Ovary (tissue), 10 donors: ENCODE measurements at regions of chr4 and their contacts with region 1.

Region 1: GRCh38 chr4:87058356-87059073 is 123.7 kb downstream of the AFF1 start:
- DNase-seq: no peak
- H3K4me3 ChIP-seq: no peak overlapping the region
- H3K27ac ChIP-seq: peak overlapping the region in 1 of 2 donors; percentile 54
- H3K4me1 ChIP-seq: peaks cover 28% of the 10 kb centered on the region
- H3K27me3 ChIP-seq: no peaks in the 10 kb centered on the region
- CTCF ChIP-seq: no peak
- EP300 ChIP-seq: no peak
- POLR2A ChIP-seq: no peak

Region 2: GRCh38 chr4:87410157-87410556 is 351.6 kb after region 1 on chr4:
- intact Hi-C with region 1: loop called in 1 of 4 experiments (anchors 2 kb)
- DNase-seq: no peak
- H3K4me3 ChIP-seq: no peak overlapping the region
- H3K27ac ChIP-seq: no peak overlapping the region
- H3K4me1 ChIP-seq: no peaks in the 10 kb centered on the region
- H3K27me3 ChIP-seq: no peaks in the 10 kb centered on the region
- CTCF ChIP-seq: no peak
- EP300 ChIP-seq: no peak
- POLR2A ChIP-seq: no peak